CD8-positive, alpha-beta T cell (primary cell): ENCODE measurements at regions of chr2 and their contacts with region 1.

Region 1: GRCh38 chr2:218008060-218009040 is 5.6 kb upstream of the TNS1 start:
- DNase-seq: no peak
- ATAC-seq: no peak
- H3K4me3 ChIP-seq: no peak overlapping the region
- H3K4me3 Mint-ChIP-seq: no peak overlapping the region
- H3K27ac ChIP-seq: no peak overlapping the region
- H3K27ac Mint-ChIP-seq: no peak overlapping the region
- H3K4me1 ChIP-seq: peaks cover 12% of the 10 kb centered on the region
- H3K4me1 Mint-ChIP-seq: peaks cover 9% of the 10 kb centered on the region
- H3K27me3 ChIP-seq: peaks cover 6 to 11% of the 10 kb centered on the region in 2 experiments
- H3K27me3 Mint-ChIP-seq: peaks cover 46% of the 10 kb centered on the region
- CTCF ChIP-seq: no peak

Region 2: DNA sequence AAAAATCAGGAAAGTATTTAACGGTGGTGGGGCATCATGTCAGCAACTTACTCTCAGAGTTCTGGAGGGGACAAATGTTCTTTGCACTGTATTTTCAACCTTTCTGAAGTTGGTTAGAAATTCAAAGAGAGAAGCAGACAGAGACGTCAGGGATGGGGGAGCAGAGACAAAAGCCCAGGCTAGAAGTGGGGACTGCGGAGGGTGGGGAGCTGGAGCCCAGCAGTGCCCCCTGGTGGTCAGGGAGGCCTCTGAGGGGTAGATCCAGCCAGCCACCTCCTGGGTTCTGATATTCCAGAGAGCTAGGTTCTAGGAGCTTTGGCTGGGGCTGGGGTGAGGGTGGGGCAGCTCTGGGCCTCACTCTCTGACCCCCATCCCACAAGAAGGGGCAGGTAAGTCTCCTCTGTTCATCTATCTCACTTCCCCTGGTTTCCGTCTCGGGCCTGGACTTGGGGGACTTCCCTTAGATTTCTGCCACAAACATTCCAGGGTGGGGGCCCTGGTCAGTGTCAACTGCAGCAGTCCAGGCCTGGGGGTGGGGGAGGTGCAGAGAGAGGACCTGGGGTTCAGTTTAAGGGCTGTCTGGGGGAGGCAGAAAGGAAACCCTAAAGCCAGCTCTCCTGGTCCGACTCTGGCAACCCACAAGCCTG is 14.4 kb before region 1 on chr2:
- CTCF ChIA-PET with region 1: interaction called, 10 read pairs
- POLR2A ChIA-PET with region 1: no interaction called
- intact Hi-C with region 1: no loop called
- DNase-seq: peak in 8 of 9 experiments; percentile 32 to 63 (median 50)
- ATAC-seq: no peak
- H3K4me3 ChIP-seq: no peak overlapping the region
- H3K4me3 Mint-ChIP-seq: no peak overlapping the region
- H3K27ac ChIP-seq: no peak overlapping the region
- H3K27ac Mint-ChIP-seq: no peak overlapping the region
- H3K4me1 ChIP-seq: no peaks in the 10 kb centered on the region
- H3K4me1 Mint-ChIP-seq: no peaks in the 10 kb centered on the region
- H3K27me3 ChIP-seq: no peaks in the 10 kb centered on the region
- H3K27me3 Mint-ChIP-seq: peaks cover 21% of the 10 kb centered on the region
- CTCF ChIP-seq: peak; percentile 56

Region 3: DNA sequence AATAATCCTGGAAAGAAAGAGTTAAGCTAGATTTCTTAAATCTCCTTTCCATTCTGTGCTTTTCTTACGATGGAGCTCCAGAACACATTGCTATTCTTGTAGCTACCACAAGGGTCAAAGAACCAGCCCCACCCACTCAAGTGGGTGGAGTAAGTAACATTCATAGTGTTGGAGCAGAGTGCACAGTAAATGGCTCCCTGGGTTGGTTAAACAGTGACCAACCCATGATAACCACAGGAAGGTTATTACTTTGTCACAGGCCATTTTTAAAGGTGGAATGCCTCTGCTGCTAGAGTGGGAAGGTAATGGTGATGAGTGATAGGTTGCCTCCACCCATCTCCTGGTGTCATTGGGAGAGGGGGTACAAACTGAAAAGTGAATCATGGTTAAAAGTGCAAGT is 222.5 kb after region 1 on chr2:
- CTCF ChIA-PET with region 1: no interaction called
- POLR2A ChIA-PET with region 1: no interaction called
- intact Hi-C with region 1: no loop called
- DNase-seq: peak in 5 of 9 experiments; percentile 13 to 75 (median 37)
- ATAC-seq: peak; percentile 72
- H3K4me3 ChIP-seq: no peak overlapping the region
- H3K4me3 Mint-ChIP-seq: peak overlapping the region; percentile 49
- H3K27ac ChIP-seq: peak overlapping the region; percentile 4 to 63
- H3K27ac Mint-ChIP-seq: peak overlapping the region; percentile 91
- H3K4me1 ChIP-seq: peaks cover 49% of the 10 kb centered on the region
- H3K4me1 Mint-ChIP-seq: peaks cover 63% of the 10 kb centered on the region
- H3K27me3 ChIP-seq: no peaks in the 10 kb centered on the region
- H3K27me3 Mint-ChIP-seq: no peaks in the 10 kb centered on the region
- CTCF ChIP-seq: peak; percentile 33

Region 4: GRCh38 chr2:218322895-218323808 is 314.8 kb after region 1 on chr2:
- CTCF ChIA-PET with region 1: no interaction called
- POLR2A ChIA-PET with region 1: no interaction called
- intact Hi-C with region 1: no loop called
- DNase-seq: peak; percentile 9 to 71 (median 45)
- ATAC-seq: peak; percentile 70
- H3K4me3 ChIP-seq: peak overlapping the region; percentile 39 to 48
- H3K4me3 Mint-ChIP-seq: peak overlapping the region; percentile 86
- H3K27ac ChIP-seq: peak overlapping the region in 1 of 2 experiments; percentile 48
- H3K27ac Mint-ChIP-seq: peak overlapping the region; percentile 77
- H3K4me1 ChIP-seq: peaks cover 47% of the 10 kb centered on the region
- H3K4me1 Mint-ChIP-seq: peaks cover 56% of the 10 kb centered on the region
- H3K27me3 ChIP-seq: peaks cover 0 to 3% of the 10 kb centered on the region in 2 experiments
- H3K27me3 Mint-ChIP-seq: peaks cover 4% of the 10 kb centered on the region
- CTCF ChIP-seq: no peak